Activated CD8-positive, alpha-beta T cell treated with anti-CD3 and anti-CD28 coated beads, Interleukin-2, amount 10 ng/mL, durations not matched to agents 7 days and 5 days (primary cell): ENCODE measurements at regions of chr1 and their contacts with region 1.

Region 1: GRCh38 chr1:42766741-42767509 is at the starts of genes C1orf50 and P3H1:
- DNase-seq: peak; percentile 100
- ATAC-seq: peak; percentile 96
- H3K4me3 Mint-ChIP-seq: no peak within 1 kb of the TSS
- H3K27ac Mint-ChIP-seq: peak within 1 kb of the TSS; percentile 96
- H3K4me1 Mint-ChIP-seq: peaks cover 31% of the 10 kb centered on the region
- H3K27me3 Mint-ChIP-seq: no peaks in the 10 kb centered on the region
- total RNA-seq, gene C1orf50: 6.3 to 6.7 TPM
- total RNA-seq, gene P3H1: 42.9 to 45.5 TPM

Region 2: DNA sequence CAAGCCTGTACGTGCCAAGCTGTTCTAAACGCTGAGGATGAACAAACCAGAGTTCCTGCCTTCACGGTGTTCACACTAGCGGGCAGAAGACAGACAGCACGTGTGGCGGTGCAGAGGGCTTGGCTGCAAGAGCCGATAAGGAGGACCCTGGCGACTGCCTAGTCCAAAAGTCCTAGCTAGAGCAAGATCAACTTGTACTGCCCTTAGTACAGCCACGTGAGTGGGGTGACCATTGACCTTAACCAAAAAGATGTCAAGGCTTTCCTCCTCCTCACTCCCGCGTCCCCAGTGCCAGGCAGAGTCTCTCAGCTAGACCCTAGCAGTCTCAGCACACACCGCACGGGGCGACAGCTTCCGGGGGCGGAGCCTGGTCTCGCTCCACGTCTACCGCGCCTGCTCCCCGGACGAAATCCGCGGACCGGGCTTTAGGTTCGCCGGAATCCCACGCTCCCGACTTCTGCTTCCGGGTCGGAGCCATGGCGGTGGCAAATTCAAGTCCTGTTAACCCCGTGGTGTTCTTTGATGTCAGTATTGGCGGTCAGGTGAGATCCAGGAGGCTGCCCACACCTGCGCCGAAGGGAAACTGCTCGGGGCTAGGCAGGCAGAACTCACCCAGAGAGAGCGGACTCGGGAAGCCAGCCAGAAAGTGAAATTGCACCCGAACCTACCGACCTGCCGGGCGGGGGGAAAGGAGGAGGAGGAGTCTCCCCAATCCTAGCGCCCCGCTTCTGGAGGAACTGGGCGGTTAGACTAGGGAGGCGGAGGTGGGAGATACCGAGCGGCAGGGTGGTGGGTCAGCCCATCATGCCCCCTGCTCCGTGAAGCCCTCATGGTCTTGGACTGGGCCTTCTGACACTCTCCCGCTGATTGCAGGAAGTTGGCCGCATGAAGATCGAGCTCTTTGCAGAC is 108.7 kb before region 1 on chr1 and contains the start of gene PPIH:
- CTCF ChIA-PET with region 1: interaction called, 8 read pairs
- POLR2A ChIA-PET with region 1: interaction called, 13 read pairs
- DNase-seq: peak; percentile 97
- ATAC-seq: peak; percentile 97
- H3K4me3 Mint-ChIP-seq: peak within 1 kb of the TSS; percentile 88
- H3K27ac Mint-ChIP-seq: peak within 1 kb of the TSS; percentile 99
- H3K4me1 Mint-ChIP-seq: peaks cover 42% of the 10 kb centered on the region
- H3K27me3 Mint-ChIP-seq: no peaks in the 10 kb centered on the region
- total RNA-seq, gene PPIH: 112 to 121 TPM

Region 3: DNA sequence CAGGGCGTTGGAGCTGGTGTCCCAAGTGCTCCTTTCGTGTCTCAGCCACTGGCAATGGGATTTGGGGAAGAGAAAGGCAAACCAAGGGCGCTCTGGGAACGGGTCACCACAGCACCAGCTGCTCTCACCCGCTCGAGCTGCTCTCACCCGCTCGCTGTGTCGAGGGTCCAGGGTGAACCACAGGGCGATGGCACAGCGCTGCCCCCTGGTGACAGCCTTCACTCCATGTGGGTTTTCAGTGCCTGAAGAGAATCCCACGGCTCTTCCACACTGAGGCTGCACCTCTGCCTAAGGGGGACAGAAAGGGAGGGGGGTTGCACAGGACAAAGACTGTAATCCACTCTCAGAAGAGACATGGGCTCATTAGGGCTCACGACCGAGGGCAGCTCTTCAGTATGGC is 19.8 kb before region 1 on chr1:
- CTCF ChIA-PET with region 1: interaction called, 12 read pairs
- POLR2A ChIA-PET with region 1: interaction called, 9 read pairs
- DNase-seq: peak; percentile 46
- ATAC-seq: peak; percentile 40
- H3K4me3 Mint-ChIP-seq: no peak overlapping the region
- H3K27ac Mint-ChIP-seq: no peak overlapping the region
- H3K4me1 Mint-ChIP-seq: no peaks in the 10 kb centered on the region
- H3K27me3 Mint-ChIP-seq: no peaks in the 10 kb centered on the region

Region 4: GRCh38 chr1:42816585-42817434 is 49.9 kb after region 1 on chr1 and contains the starts of genes ERMAP and SVBP:
- CTCF ChIA-PET with region 1: interaction called, 3 read pairs
- POLR2A ChIA-PET with region 1: interaction called, 17 read pairs
- DNase-seq: peak; percentile 94
- ATAC-seq: peak; percentile 92
- H3K4me3 Mint-ChIP-seq: peak within 1 kb of the TSS; percentile 86
- H3K27ac Mint-ChIP-seq: peak within 1 kb of the TSS; percentile 83
- H3K4me1 Mint-ChIP-seq: peaks cover 23% of the 10 kb centered on the region
- H3K27me3 Mint-ChIP-seq: no peaks in the 10 kb centered on the region
- total RNA-seq, gene ERMAP: 5.7 to 6.0 TPM
- total RNA-seq, gene SVBP: 17.1 to 18.0 TPM

Region 5: DNA sequence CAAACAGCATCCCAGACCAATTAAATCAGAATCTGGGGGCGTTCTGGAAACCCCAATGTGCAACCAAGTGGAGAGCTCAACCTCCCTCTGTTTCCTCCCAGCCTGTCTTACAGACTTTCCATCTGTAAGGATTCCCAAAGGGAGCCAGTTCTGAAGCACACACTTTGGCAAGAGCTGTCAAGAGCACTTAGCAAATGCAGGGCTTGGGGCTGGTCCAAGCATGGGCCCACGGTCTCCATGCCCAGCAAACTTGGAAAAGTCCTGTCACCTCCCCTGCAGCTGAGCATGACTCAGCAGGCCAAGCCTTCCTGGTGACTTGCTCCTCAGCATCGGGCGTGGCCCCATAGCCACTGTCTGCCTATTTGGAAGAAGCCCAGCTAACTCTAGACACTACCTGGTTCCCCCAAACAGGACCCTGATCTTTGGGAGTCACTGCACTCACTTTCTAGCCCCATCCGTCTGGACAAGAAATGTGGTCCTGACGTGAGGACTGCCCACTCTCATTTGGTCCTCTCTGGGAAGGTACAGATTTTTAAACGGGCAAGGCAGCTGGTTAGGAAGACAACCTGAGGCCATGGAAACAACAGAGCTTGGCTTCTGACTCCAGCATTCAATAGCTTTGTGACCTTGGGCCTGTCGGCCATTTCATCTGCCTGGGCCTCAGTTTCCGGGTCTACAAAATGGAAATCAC is 174.9 kb after region 1 on chr1:
- CTCF ChIA-PET with region 1: interaction called, 3 read pairs
- POLR2A ChIA-PET with region 1: interaction called, 10 read pairs
- DNase-seq: no peak
- ATAC-seq: no peak
- H3K4me3 Mint-ChIP-seq: no peak overlapping the region
- H3K27ac Mint-ChIP-seq: peak overlapping the region; percentile 86
- H3K4me1 Mint-ChIP-seq: peaks cover 98% of the 10 kb centered on the region
- H3K27me3 Mint-ChIP-seq: no peaks in the 10 kb centered on the region